ENCODE measurements at regions of chr19 and their contacts with region 1.

Region 1: DNA sequence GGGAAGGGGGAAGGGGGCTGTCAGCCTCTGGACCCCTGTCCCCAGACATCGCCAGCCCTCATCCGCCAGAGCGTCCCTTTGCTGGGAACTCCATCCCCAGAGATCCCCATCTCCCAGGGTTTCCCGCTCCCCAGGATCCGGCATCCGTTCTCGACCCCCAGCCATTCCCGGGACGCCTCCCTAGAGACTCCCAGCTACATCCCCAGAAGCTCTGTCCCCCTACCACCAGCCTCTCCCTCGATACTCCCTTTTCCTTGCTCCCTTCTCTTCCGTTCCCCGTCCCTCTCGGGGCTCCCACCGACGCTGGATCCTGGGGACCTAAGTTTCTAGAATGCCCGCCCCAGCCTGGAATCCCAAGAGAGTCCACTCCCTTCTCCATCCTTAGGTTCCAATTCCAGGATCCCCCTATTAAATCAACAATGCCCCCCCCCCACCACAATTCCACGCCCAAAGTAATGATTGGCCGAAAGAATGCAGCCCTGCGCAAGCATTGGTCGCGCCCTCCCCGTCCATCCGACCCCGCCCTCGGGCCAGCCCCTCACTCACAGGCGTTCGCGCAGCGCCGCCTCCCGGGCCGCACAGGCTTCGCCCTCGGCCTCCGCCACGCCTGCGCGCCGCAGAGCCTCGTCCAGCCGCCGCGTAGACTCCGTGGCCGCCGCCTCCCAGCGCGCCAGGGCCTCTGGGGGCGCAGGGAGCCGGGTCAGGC is 3.2 kb downstream of the CCDC194 start:
- DNase-seq: no peak
- ATAC-seq: peak; percentile 98
- H3K4me3 ChIP-seq: peak overlapping the region; percentile 72
- H3K27ac ChIP-seq: no peak overlapping the region
- H3K4me1 ChIP-seq: peaks cover 9% of the 10 kb centered on the region
- H3K27me3 ChIP-seq: peaks cover 2 to 3% of the 10 kb centered on the region in 2 experiments; a peak in 3 of 4 replicates
- CTCF ChIP-seq: peak; percentile 61 to 95 (median 65); a peak in 4 of 6 replicates
- EP300 ChIP-seq: no peak
- POLR2A ChIP-seq: peak; percentile 48
- RAD21 ChIP-seq: peak; percentile 56

Region 2: DNA sequence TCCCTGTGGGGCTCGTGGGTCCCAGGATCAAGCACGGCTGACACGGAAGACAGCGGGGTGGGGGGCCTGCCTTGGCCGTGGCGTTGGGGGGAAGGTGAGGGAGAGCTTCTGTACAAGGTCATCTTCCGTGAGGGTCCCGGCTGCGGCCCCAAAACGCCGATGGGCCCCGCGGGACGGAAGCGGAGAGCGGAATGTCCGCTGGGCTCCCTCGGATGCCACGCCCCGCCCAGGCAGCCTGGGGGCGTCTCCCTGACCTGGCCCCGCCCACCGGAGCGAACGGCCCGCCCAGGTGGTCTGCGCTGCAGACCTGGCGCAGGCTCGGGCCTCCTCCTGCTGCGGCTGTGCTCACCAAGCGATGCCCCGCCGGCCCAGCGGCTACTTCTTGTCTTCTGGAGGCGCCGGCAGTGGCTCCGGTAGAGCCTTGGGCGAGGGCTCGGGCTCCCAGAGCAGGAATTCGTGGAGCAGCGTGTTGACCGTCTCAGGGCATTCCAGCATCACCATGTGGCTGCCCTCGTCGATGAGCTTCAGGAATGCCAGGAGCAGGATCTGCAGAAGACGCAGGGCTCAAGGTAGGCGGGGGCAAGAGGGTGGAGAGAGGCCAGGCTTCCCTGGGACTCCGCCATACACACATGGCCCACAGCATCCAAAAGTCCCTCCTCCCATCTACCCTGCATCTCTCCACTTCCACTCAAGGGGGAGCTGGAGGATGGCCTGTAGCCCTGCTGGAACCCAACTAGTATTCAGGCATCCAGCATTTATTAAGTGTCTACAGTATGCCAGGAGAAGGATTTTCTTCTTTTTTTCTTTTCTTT is 98.3 kb before region 1 on chr19:
- CTCF ChIA-PET with region 1: interaction called, 81 read pairs
- POLR2A ChIA-PET with region 1: no interaction called
- RAD21 ChIA-PET with region 1: interaction called, 17 read pairs
- SMC1A ChIA-PET with region 1: interaction called, 9 read pairs
- in situ Hi-C with region 1: loop called (anchors 5 kb)
- intact Hi-C with region 1: no loop called
- DNase-seq: peak; percentile 46
- ATAC-seq: peak; percentile 97
- H3K4me3 ChIP-seq: peak overlapping the region; percentile 86
- H3K27ac ChIP-seq: peak overlapping the region; percentile 35
- H3K4me1 ChIP-seq: peaks cover 4% of the 10 kb centered on the region; the same call in 1 of the 2 replicates
- H3K27me3 ChIP-seq: no peaks in the 10 kb centered on the region
- CTCF ChIP-seq: peak; percentile 84 to 95 (median 85)
- EP300 ChIP-seq: no peak
- POLR2A ChIP-seq: peak; percentile 82
- RAD21 ChIP-seq: peak; percentile 94

Region 3: GRCh38 chr19:17346109-17346671 is 44.6 kb before region 1 on chr19:
- CTCF ChIA-PET with region 1: interaction called, 170 read pairs
- POLR2A ChIA-PET with region 1: interaction called, 8 read pairs
- RAD21 ChIA-PET with region 1: interaction called, 32 read pairs
- SMC1A ChIA-PET with region 1: interaction called, 69 read pairs
- in situ Hi-C with region 1: loop called (anchors 5 kb)
- intact Hi-C with region 1: loop called (anchors 1 kb)
- DNase-seq: peak; percentile 42
- ATAC-seq: peak; percentile 99
- H3K4me3 ChIP-seq: no peak overlapping the region
- H3K27ac ChIP-seq: no peak overlapping the region
- H3K4me1 ChIP-seq: peaks cover 19% of the 10 kb centered on the region
- H3K27me3 ChIP-seq: no peaks in the 10 kb centered on the region
- CTCF ChIP-seq: peak; percentile 93 to 96 (median 95); a peak in 5 of 6 replicates
- EP300 ChIP-seq: no peak
- POLR2A ChIP-seq: no peak
- RAD21 ChIP-seq: peak; percentile 79

Region 4: GRCh38 chr19:17358395-17358794 is 32.4 kb before region 1 on chr19:
- CTCF ChIA-PET with region 1: interaction called, 11 read pairs
- POLR2A ChIA-PET with region 1: no interaction called
- RAD21 ChIA-PET with region 1: interaction called, 4 read pairs
- SMC1A ChIA-PET with region 1: interaction called, 4 read pairs
- in situ Hi-C with region 1: no loop called
- intact Hi-C with region 1: no loop called
- DNase-seq: no peak
- ATAC-seq: no peak
- H3K4me3 ChIP-seq: no peak overlapping the region
- H3K27ac ChIP-seq: no peak overlapping the region
- H3K4me1 ChIP-seq: no peaks in the 10 kb centered on the region
- H3K27me3 ChIP-seq: no peaks in the 10 kb centered on the region
- CTCF ChIP-seq: no peak
- EP300 ChIP-seq: no peak
- POLR2A ChIP-seq: no peak
- RAD21 ChIP-seq: no peak

Region 5: GRCh38 chr19:17370026-17370587 is 20.7 kb before region 1 on chr19:
- CTCF ChIA-PET with region 1: interaction called, 14 read pairs
- POLR2A ChIA-PET with region 1: no interaction called
- RAD21 ChIA-PET with region 1: interaction called, 7 read pairs
- SMC1A ChIA-PET with region 1: interaction called, 8 read pairs
- in situ Hi-C with region 1: no loop called
- intact Hi-C with region 1: no loop called
- DNase-seq: peak; percentile 94
- ATAC-seq: peak; percentile 96
- H3K4me3 ChIP-seq: peak overlapping the region; percentile 46; the same call in 1 of the 2 replicates
- H3K27ac ChIP-seq: peak overlapping the region; percentile 94
- H3K4me1 ChIP-seq: peaks cover 29% of the 10 kb centered on the region
- H3K27me3 ChIP-seq: no peaks in the 10 kb centered on the region; a peak in 1 of 4 replicates
- CTCF ChIP-seq: no peak
- EP300 ChIP-seq: peak; percentile 64 to 75; a peak in 2 of 4 replicates
- POLR2A ChIP-seq: no peak
- RAD21 ChIP-seq: no peak

Region 6: GRCh38 chr19:17470068-17470841 is 79.4 kb after region 1 on chr19 and contains the start of gene SLC27A1:
- CTCF ChIA-PET with region 1: interaction called, 36 read pairs
- POLR2A ChIA-PET with region 1: interaction called, 3 read pairs
- RAD21 ChIA-PET with region 1: no interaction called
- SMC1A ChIA-PET with region 1: interaction called, 4 read pairs
- in situ Hi-C with region 1: loop called (anchors 5 kb)
- intact Hi-C with region 1: loop called (anchors 1 kb)
- DNase-seq: peak; percentile 86
- ATAC-seq: peak; percentile 94
- H3K4me3 ChIP-seq: peak within 1 kb of the TSS; percentile 80
- H3K27ac ChIP-seq: peak within 1 kb of the TSS; percentile 61
- H3K4me1 ChIP-seq: peaks cover 22% of the 10 kb centered on the region
- H3K27me3 ChIP-seq: no peaks in the 10 kb centered on the region
- CTCF ChIP-seq: no peak
- EP300 ChIP-seq: no peak
- POLR2A ChIP-seq: peak; percentile 73
- RAD21 ChIP-seq: no peak
- polyA plus RNA-seq, gene SLC27A1: 0.11 to 0.31 TPM

Region 7: GRCh38 chr19:17522988-17523872 is 132.4 kb after region 1 on chr19:
- CTCF ChIA-PET with region 1: no interaction called
- POLR2A ChIA-PET with region 1: no interaction called
- RAD21 ChIA-PET with region 1: no interaction called
- SMC1A ChIA-PET with region 1: no interaction called
- in situ Hi-C with region 1: no loop called
- intact Hi-C with region 1: no loop called
- DNase-seq: peak; percentile 92
- ATAC-seq: peak; percentile 92
- H3K4me3 ChIP-seq: peak overlapping the region; percentile 23; the same call in 1 of the 2 replicates
- H3K27ac ChIP-seq: peak overlapping the region; percentile 95
- H3K4me1 ChIP-seq: peaks cover 46% of the 10 kb centered on the region
- H3K27me3 ChIP-seq: no peaks in the 10 kb centered on the region
- CTCF ChIP-seq: no peak
- EP300 ChIP-seq: peak; percentile 58 to 82
- POLR2A ChIP-seq: peak; percentile 82
- RAD21 ChIP-seq: peak; percentile 18; the same call in 1 of the 2 replicates

Measured in GM12878 (cell line).